Heart left ventricle (tissue), 16 donors: ENCODE measurements at regions of chr14 and their contacts with region 1.

Region 1: DNA sequence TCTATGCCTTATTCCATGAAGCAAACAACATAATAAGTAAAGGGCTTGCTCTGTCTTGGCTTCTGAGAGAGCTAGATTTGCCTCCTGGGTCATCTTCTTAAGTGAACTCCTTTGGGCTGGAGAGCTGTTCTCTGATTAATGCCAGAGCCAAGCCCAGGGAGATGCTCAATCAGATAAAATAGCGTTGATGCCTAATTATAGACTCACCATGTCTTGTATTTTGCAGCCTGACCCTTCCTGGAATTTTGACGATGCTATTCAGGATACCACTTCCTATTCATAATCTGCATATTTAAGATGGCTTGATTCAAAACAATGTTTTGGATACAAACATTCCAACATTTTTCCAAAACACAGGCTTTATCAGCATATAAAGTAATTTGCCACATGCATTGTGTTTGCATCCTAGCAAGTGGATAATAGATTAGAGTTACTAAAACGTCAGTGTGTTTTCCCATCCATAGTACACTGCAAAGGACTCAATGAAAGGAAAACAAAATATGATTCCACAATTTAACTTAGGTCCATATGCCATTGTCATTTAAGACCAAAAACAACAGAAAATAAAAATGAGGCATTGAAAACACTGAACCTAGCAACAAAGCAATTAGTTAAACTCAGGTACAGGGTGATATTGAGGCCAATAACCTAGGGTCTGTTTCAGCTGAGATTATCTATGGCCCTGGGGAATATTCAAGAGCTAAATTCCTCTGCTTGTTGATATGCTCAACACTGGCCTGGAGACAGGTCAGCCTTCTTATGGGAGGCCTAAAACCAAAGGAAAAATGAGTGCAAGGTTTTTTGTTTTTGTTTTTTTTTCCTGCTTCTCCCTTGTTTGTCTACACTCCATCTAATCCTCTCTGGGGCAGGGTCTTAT is 184.2 kb upstream of the FOXN3 start:
- DNase-seq: no peak
- ATAC-seq: peak; percentile 60 to 82 (median 78)
- H3K4me3 ChIP-seq: no peak overlapping the region
- H3K27ac ChIP-seq: peak overlapping the region in 8 of 12 donors; percentile 18 to 68 (median 45)
- H3K4me1 ChIP-seq: peaks cover 5 to 41% (median 22%) of the 10 kb centered on the region in 12 donors
- H3K27me3 ChIP-seq: no peaks in the 10 kb centered on the region
- CTCF ChIP-seq: no peak
- POLR2A ChIP-seq: no peak

Region 2: DNA sequence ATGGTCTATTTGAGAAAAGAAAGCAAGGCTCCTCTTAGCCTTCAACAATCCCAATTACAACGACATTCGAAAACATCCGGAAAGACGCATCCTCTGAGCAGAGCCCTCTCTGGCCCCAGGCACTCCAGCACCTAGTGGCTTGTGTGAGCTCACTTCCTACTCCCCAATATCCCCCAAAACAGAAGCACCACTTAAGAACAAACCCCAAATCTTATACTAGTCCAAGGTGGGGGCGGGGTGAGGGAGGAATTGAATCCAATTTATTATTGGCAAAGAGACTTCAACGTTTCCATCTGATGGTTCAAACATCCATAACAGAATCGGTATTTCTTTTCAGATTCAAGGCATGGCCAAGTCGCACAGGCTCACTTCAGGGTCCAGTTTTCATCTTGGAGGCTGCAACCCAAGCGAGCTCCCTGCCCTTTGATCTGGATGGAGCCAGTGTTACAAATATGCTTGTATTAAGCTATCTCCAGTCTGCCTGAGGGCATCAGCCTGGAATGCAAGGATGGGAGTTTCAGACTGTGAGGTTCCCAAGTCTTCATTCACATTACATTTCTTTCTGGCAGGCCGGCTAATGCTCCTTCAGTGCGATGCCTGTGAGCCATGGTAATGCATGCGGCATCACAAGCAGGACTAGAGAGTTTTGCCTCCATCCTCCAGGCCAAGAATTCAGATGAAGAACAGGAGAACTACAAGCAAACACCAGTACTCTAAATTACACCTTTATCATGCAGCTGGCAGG is 51.6 kb before region 1 on chr14:
- intact Hi-C with region 1: loop called in 2 of 10 experiments (anchors 2 to 5 kb)
- DNase-seq: no peak
- ATAC-seq: no peak
- H3K4me3 ChIP-seq: no peak overlapping the region
- H3K27ac ChIP-seq: no peak overlapping the region
- H3K4me1 ChIP-seq: peaks cover 0 to 32% (median 13%) of the 10 kb centered on the region in 12 donors
- H3K27me3 ChIP-seq: no peaks in the 10 kb centered on the region
- CTCF ChIP-seq: no peak
- POLR2A ChIP-seq: no peak